A549 (cell line): ENCODE measurements at regions of chr1 and their contacts with region 1.

Region 1: GRCh38 chr1:44090429-44091252 is 28.0 kb upstream of the KLF17 start:
- DNase-seq: no peak
- ATAC-seq: no peak
- H3K4me3 ChIP-seq: no peak overlapping the region
- H3K27ac ChIP-seq: no peak overlapping the region
- H3K4me1 ChIP-seq: peaks cover 10% of the 10 kb centered on the region; the same call in 2 of the 3 replicates
- CTCF ChIP-seq: no peak
- EP300 ChIP-seq: no peak
- POLR2A ChIP-seq: no peak
- RAD21 ChIP-seq: no peak

Region 2: GRCh38 chr1:43991476-43992231 is 99.0 kb before region 1 on chr1 and contains the start of gene CCDC24:
- CTCF ChIA-PET with region 1: no interaction called
- POLR2A ChIA-PET with region 1: no interaction called
- DNase-seq: peak; percentile 65 to 83
- ATAC-seq: peak; percentile 73 to 87
- H3K4me3 ChIP-seq: peak within 1 kb of the TSS; percentile 84
- H3K27ac ChIP-seq: peak within 1 kb of the TSS; percentile 87 to 89
- H3K4me1 ChIP-seq: peaks cover 27% of the 10 kb centered on the region
- CTCF ChIP-seq: no peak
- EP300 ChIP-seq: no peak
- POLR2A ChIP-seq: peak; percentile 43
- RAD21 ChIP-seq: no peak
- polyA plus RNA-seq, gene CCDC24: 2.0 and 2.9 TPM in 2 replicates

Region 3: GRCh38 chr1:44103270-44104131 is 12.9 kb after region 1 on chr1:
- CTCF ChIA-PET with region 1: interaction called, 16 read pairs
- POLR2A ChIA-PET with region 1: no interaction called
- DNase-seq: peak in 1 of 2 experiments; percentile 59
- ATAC-seq: peak in 1 of 2 experiments; percentile 36; a peak in 2 of 6 replicates
- H3K4me3 ChIP-seq: no peak overlapping the region
- H3K27ac ChIP-seq: peak overlapping the region in 1 of 2 experiments; percentile 60; a peak in 2 of 6 replicates
- H3K4me1 ChIP-seq: no peaks in the 10 kb centered on the region
- CTCF ChIP-seq: peak; percentile 20; the same call in 1 of the 3 replicates
- EP300 ChIP-seq: no peak
- POLR2A ChIP-seq: no peak
- RAD21 ChIP-seq: peak in 1 of 2 experiments; percentile 46; a peak in 4 of 5 replicates